Spleen (tissue), 13 donors: ENCODE measurements at regions of chr13 and their contacts with region 1.

Region 1: GRCh38 chr13:30802953-30803478 is 67.7 kb downstream of the ALOX5AP start:
- DNase-seq: peak; percentile 96
- H3K4me3 ChIP-seq: peak overlapping the region in 7 of 8 donors; percentile 8 to 61 (median 29)
- H3K27ac ChIP-seq: peak overlapping the region in 4 of 8 donors; percentile 5 to 62 (median 20)
- H3K4me1 ChIP-seq: peaks cover 12 to 42% (median 28%) of the 10 kb centered on the region in 6 donors
- H3K27me3 ChIP-seq: no peaks in the 10 kb centered on the region
- CTCF ChIP-seq: peak; percentile 81 to 98 (median 95)
- POLR2A ChIP-seq: peak in 1 of 3 donors; percentile 40

Region 2: DNA sequence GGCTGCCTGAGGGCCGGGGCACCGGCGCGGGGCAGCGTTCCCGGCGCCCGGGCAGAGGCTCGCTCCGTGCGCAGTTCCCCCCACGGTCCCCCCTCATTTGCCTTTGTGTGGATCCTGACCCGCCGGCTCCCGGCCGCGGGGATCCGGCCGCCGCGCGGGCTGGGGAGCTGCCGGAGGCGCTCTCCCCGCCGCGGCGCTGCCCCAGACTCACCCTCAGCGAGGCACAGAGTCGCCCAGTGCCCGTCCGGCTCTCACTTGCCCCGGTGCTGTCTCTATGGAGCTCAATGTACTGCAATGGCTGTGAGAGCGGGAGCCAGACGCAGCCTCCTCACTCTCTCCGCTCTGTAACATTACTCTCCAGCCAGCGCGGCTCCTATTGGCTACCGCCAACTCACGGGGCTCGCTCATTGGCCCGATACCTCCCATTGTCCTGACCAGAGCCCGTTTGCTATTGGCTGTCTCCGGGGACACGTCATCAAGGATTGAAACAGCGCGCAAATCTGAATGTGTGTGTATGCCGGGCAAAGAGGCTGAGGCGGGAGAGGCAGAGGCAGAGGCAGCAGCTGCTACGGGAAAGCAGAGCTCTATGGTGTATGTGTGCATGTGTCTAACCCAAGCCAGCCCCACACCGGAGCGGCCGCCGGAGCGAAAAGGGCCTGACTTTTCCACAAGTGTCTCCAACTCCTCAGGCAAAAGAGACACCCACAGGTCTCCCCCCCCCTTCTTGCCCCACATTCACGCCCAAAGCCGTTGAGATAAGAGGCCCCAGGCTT is 337.2 kb before region 1 on chr13 and contains the start of gene HMGB1:
- intact Hi-C with region 1: loop called (anchors 10 kb)
- DNase-seq: peak; percentile 98
- H3K4me3 ChIP-seq: peak within 1 kb of the TSS; percentile 56 to 83 (median 65)
- H3K27ac ChIP-seq: peak within 1 kb of the TSS; percentile 99 to 100 (median 100)
- H3K4me1 ChIP-seq: peaks cover 28 to 44% (median 42%) of the 10 kb centered on the region in 6 donors
- H3K27me3 ChIP-seq: no peaks in the 10 kb centered on the region
- CTCF ChIP-seq: peak in 1 of 11 experiments; percentile 14
- POLR2A ChIP-seq: peak; percentile 93 to 99 (median 96)
- total RNA-seq, gene HMGB1: 221 to 400 (median 295) TPM

Region 3: GRCh38 chr13:30572859-30573275 is 230.1 kb before region 1 on chr13:
- intact Hi-C with region 1: loop called (anchors 5 kb)
- DNase-seq: no peak
- H3K4me3 ChIP-seq: peak overlapping the region in 7 of 8 donors; percentile 9 to 58 (median 15)
- H3K27ac ChIP-seq: peak overlapping the region; percentile 36 to 78 (median 75)
- H3K4me1 ChIP-seq: peaks cover 0 to 59% (median 28%) of the 10 kb centered on the region in 6 donors
- H3K27me3 ChIP-seq: no peaks in the 10 kb centered on the region
- CTCF ChIP-seq: peak in 3 of 11 experiments; percentile 14 to 37 (median 22)
- POLR2A ChIP-seq: no peak

Region 4: DNA sequence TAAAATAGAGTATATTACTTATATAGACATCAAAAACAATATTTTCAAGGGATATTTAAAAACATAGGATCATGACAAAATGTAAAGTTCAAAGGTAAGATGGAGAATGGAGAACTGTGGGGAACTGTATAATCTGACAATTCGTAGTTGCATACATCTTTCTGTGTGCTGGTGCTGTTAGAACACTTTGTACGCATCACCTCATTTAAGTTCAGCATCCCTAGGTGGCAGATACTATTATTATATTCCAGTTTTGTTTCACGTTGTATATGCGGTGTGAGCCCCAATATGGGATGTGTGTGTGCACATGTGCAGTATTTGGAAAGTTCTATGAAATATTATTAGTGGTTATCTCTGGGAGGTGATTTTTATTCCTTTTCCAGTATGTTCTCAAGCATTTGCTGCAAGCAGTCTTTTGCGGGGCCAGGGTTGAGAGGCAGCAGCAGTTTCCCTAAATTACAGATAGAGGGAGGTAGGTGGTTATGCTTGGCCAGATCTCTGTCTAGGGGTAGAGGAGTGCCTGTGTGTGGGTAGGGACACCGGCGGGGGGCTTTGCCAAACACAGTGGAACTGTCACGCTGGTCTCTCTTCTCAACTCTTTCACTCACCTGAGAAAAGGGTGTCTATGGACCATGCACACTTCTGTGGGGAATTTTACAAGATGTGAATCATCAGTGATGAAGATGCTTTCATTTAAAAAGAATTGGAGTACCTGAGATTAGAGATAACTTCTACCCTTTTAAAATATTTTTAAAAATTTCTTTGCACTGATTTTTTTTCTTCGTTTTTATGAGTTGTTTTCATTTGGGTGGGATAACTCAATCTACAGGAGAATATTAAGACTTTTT is 123.3 kb before region 1 on chr13:
- intact Hi-C with region 1: loop called (anchors 5 kb)
- DNase-seq: no peak
- H3K4me3 ChIP-seq: no peak overlapping the region
- H3K27ac ChIP-seq: peak overlapping the region in 1 of 8 donors; percentile 12
- H3K4me1 ChIP-seq: peaks cover 0 to 32% (median 10%) of the 10 kb centered on the region in 6 donors
- H3K27me3 ChIP-seq: no peaks in the 10 kb centered on the region
- CTCF ChIP-seq: peak; percentile 49 to 77 (median 62)
- POLR2A ChIP-seq: no peak